IMR-90 (cell line): ENCODE measurements at regions of chr15 and their contacts with region 1.

Region 1: GRCh38 chr15:90886041-90886614 is 1.8 kb downstream of the FES start:
- DNase-seq: peak; percentile 51
- ATAC-seq: peak; percentile 69
- H3K4me3 ChIP-seq: no peak overlapping the region
- H3K27ac ChIP-seq: no peak overlapping the region
- H3K4me1 ChIP-seq: peaks cover 16% of the 10 kb centered on the region
- H3K27me3 ChIP-seq: no peaks in the 10 kb centered on the region
- CTCF ChIP-seq: peak; percentile 97
- POLR2A ChIP-seq: no peak
- RAD21 ChIP-seq: peak; percentile 98

Region 2: GRCh38 chr15:90489944-90490343 is 396.2 kb before region 1 on chr15:
- CTCF ChIA-PET with region 1: no interaction called
- POLR2A ChIA-PET with region 1: no interaction called
- dilution Hi-C with region 1: no loop called
- in situ Hi-C with region 1: loop called (anchors 10 kb)
- intact Hi-C with region 1: loop called (anchors 5 kb)
- DNase-seq: peak; percentile 24
- ATAC-seq: peak; percentile 71
- H3K4me3 ChIP-seq: no peak overlapping the region
- H3K27ac ChIP-seq: no peak overlapping the region
- H3K4me1 ChIP-seq: peaks cover 4% of the 10 kb centered on the region
- H3K27me3 ChIP-seq: no peaks in the 10 kb centered on the region
- CTCF ChIP-seq: no peak
- POLR2A ChIP-seq: no peak
- RAD21 ChIP-seq: no peak

Region 3: GRCh38 chr15:90497912-90498311 is 388.2 kb before region 1 on chr15:
- CTCF ChIA-PET with region 1: no interaction called
- POLR2A ChIA-PET with region 1: no interaction called
- dilution Hi-C with region 1: no loop called
- in situ Hi-C with region 1: loop called (anchors 10 kb)
- intact Hi-C with region 1: loop called (anchors 5 kb)
- DNase-seq: no peak
- ATAC-seq: no peak
- H3K4me3 ChIP-seq: no peak overlapping the region
- H3K27ac ChIP-seq: no peak overlapping the region
- H3K4me1 ChIP-seq: no peaks in the 10 kb centered on the region
- H3K27me3 ChIP-seq: no peaks in the 10 kb centered on the region
- CTCF ChIP-seq: no peak
- POLR2A ChIP-seq: no peak
- RAD21 ChIP-seq: no peak

Region 4: GRCh38 chr15:90642464-90643300 is 243.4 kb before region 1 on chr15:
- CTCF ChIA-PET with region 1: interaction called, 13 read pairs
- POLR2A ChIA-PET with region 1: no interaction called
- dilution Hi-C with region 1: no loop called
- in situ Hi-C with region 1: loop called (anchors 5 kb)
- intact Hi-C with region 1: no loop called
- DNase-seq: no peak
- ATAC-seq: peak; percentile 34; the same call in 1 of the 2 replicates
- H3K4me3 ChIP-seq: no peak overlapping the region
- H3K27ac ChIP-seq: no peak overlapping the region
- H3K4me1 ChIP-seq: no peaks in the 10 kb centered on the region
- H3K27me3 ChIP-seq: no peaks in the 10 kb centered on the region
- CTCF ChIP-seq: no peak
- POLR2A ChIP-seq: no peak
- RAD21 ChIP-seq: no peak

Region 5: DNA sequence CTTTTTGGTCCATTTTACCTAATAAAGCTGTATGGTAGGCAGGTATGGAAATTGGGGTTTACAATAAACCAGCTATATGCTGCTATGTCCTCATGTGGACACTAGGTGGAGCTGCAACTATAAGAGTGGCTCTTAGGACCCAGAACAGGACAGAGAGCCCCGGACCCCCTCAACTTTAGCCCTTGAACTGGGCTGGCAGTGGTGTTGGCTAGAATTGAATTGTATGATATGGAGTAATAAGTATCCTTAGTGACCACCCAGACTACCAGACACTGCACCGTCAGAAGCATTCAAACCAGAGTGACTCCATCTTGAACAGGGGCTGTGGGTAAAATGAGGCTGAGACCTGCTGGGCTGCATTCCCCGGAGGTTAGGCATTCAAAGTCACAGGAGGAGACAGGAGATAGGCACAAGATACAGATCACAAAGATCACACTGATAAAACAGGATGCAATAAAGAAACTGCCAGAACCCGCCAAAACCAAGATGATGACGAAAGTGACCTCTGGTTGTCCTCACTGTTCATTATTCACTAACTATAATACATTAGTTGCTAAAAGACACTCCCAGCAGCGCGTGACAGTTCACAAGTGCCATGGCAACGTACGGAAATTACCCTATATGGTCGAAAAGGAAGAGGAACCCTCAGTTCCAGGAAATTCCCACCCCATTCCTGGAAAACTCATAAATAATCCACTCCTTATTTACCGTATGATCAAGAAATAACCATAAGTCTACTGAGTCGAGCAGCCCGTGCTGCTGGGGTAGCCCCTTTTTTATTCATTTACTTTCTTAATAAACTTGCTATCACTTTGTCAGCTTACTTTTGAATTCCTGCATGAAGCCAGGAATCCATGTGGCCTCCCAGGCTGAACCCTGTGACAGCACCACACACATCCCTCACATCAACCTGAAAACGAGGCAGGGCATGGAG is 237.7 kb before region 1 on chr15:
- CTCF ChIA-PET with region 1: interaction called, 13 read pairs
- POLR2A ChIA-PET with region 1: no interaction called
- dilution Hi-C with region 1: no loop called
- in situ Hi-C with region 1: loop called (anchors 5 kb)
- intact Hi-C with region 1: loop called (anchors 1 kb)
- DNase-seq: peak; percentile 69
- ATAC-seq: peak; percentile 89
- H3K4me3 ChIP-seq: no peak overlapping the region
- H3K27ac ChIP-seq: peak overlapping the region; percentile 38; the same call in 1 of the 2 replicates
- H3K4me1 ChIP-seq: peaks cover 6% of the 10 kb centered on the region
- H3K27me3 ChIP-seq: no peaks in the 10 kb centered on the region
- CTCF ChIP-seq: peak; percentile 92
- POLR2A ChIP-seq: peak; percentile 52; the same call in 1 of the 2 replicates
- RAD21 ChIP-seq: peak; percentile 95

Region 6: DNA sequence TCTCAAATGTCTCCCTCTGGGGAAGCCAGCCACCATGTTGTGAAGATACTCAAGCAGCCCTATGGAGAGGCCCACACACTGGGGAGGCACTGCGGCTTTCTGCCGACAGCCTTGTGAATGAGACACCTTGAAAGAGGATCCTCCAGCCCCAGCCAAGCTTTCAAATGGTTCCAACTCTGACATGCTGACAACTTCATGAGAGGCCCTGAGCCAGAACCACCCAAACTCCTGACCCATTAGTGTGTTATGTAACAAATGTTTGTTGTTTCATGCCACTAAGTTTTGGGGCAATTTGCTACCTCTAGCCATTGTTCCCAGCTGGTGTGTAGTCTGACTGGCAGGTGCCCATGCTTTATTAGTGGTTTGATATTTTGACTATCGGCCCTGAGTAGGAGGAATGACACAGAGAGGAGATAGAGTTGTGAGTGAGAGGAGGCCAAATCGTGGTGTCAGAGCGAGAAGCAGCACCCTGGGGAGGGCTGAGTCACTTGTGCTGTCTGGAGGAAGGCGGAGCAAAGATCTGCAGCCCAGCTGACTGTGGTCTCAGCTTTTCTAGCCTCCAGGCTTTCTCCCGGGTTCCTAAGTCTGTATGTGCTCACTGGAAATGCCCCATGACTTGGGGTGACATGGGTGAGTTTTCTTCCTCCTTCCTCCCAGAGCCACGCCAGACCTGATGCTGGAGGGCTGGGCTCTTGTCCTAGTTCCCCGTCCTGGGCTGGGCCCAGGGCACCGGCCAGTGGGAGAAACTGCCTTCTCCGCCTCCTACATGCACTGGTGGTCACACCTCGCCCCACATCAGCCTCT is 225.7 kb before region 1 on chr15:
- CTCF ChIA-PET with region 1: interaction called, 4 read pairs
- POLR2A ChIA-PET with region 1: no interaction called
- dilution Hi-C with region 1: no loop called
- in situ Hi-C with region 1: no loop called
- intact Hi-C with region 1: loop called (anchors 5 kb)
- DNase-seq: peak; percentile 91
- ATAC-seq: peak; percentile 95
- H3K4me3 ChIP-seq: no peak overlapping the region
- H3K27ac ChIP-seq: no peak overlapping the region
- H3K4me1 ChIP-seq: peaks cover 11% of the 10 kb centered on the region
- H3K27me3 ChIP-seq: no peaks in the 10 kb centered on the region
- CTCF ChIP-seq: no peak
- POLR2A ChIP-seq: no peak
- RAD21 ChIP-seq: no peak

Region 7: DNA sequence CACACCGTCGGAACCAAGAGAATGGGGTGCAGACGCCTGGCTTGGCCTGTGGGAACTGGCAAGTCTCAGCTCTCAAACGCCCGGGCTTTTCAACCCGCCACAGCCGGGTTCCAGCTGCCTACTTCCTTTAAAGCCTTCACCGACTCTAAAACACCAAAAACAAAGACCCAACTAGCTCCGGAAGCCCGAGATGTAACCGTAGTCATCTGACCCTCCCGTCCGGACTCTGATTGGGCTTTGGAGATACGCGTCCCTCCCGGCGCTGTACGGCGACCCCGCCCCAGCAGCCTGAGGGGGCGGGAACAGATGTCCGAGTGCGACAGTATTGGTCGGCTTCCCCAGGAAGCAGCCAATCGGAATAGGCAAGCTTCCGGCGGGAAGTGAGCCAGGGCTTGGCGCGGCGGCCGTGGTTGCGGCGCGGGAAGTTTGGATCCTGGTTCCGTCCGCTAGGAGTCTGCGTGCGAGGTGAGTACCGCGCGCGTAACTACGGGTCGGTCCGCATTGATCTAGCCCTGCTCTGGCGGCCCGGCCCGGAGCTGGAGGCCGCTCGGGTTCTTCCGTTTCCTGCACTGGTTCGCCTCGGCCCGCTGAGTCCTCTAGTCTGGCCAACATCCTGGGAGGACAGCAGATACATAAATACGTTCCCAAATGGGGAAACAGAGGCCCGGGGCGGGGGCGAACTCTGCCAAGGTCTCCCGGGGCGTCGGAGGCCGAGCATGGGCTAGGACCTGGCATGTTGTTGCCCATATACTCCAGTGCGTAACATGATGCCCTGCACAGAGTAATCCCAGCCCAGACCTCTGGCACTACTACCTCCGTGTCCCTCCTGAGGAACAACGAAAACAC is 168.9 kb before region 1 on chr15 and contains the start of gene BLM:
- CTCF ChIA-PET with region 1: interaction called, 3 read pairs
- POLR2A ChIA-PET with region 1: no interaction called
- dilution Hi-C with region 1: no loop called
- in situ Hi-C with region 1: no loop called
- intact Hi-C with region 1: loop called (anchors 5 kb)
- DNase-seq: peak; percentile 97
- ATAC-seq: peak; percentile 100
- H3K4me3 ChIP-seq: peak within 1 kb of the TSS; percentile 63
- H3K27ac ChIP-seq: peak within 1 kb of the TSS; percentile 69
- H3K4me1 ChIP-seq: peaks cover 2% of the 10 kb centered on the region; the same call in 1 of the 2 replicates
- H3K27me3 ChIP-seq: no peaks in the 10 kb centered on the region
- CTCF ChIP-seq: peak; percentile 20; the same call in 1 of the 2 replicates
- POLR2A ChIP-seq: peak; percentile 84
- RAD21 ChIP-seq: no peak
- total RNA-seq, gene BLM: 6.5 and 7.2 TPM in 2 replicates